Activated CD4-positive, alpha-beta T cell treated with anti-CD3 and anti-CD28 coated beads for 36 hours (primary cell): ENCODE measurements at regions of chr1 and their contacts with region 1.

Region 1: DNA sequence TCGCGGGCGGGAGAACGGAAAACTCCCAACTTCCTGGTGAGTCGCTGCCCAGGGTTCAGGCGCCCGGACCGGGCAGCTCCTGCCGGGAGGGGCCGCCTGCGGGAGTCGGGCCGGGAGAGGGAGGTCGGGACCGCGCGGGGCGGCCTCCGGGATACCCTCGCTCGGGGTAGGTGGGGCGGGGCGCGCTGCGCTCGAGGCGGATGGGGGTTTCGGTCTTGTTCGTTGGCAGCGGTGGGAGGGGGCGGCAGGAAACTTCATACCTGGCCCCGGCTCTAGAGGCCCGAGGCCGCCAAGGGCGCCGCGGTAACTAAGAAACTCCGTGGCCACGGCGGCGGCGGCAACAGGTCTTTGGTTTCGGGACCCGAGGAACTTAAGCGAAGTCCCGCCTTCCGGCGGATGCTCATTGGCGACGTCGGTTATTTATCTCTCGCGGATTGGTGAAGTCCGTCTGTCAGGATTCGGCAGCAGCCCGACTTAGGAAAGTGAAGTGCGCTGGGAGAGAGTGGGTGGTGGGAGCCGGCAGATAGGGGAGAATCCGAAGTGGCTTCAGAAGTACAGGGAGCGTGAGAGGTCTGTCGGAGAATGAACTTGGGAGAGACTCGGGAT is 546 bp downstream of the NEK7 start:
- DNase-seq: peak; percentile 89
- ATAC-seq: peak; percentile 29
- H3K4me3 Mint-ChIP-seq: peak overlapping the region; percentile 94
- H3K27ac Mint-ChIP-seq: peak overlapping the region; percentile 99
- H3K4me1 Mint-ChIP-seq: peaks cover 34% of the 10 kb centered on the region
- H3K27me3 Mint-ChIP-seq: no peaks in the 10 kb centered on the region

Region 2: DNA sequence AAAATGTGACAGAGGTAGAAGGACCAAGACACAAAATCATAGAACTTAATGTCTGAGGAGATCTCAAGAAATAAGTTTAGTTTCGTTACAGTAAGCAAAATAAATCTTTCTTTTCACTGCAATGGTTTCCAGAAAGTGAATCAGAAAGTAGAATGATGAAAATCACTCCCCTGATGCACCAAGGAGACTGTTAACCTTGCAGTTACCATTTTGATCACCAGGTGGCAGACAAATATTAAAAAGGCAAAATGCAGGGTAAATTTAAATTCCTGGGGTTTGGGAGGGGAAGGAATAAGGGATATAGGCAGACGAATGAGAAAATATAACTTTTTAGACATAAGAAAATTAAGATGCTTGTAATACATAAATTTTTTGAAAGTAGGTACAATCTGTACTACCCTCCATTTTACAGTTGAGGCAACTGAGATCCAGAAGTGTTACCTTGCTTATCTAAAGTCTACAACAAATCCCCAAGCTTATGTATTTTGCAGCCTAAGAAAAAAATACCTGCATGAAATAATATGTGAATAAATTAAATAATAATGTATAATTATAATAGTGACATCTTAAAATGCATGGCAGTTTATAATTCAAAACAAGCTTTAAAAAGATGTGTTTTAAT is 636.1 kb before region 1 on chr1:
- CTCF ChIA-PET with region 1: no interaction called
- POLR2A ChIA-PET with region 1: no interaction called
- intact Hi-C with region 1: loop called in 1 of 2 experiments (anchors 2 kb)
- DNase-seq: peak; percentile 13
- ATAC-seq: peak; percentile 65
- H3K4me3 Mint-ChIP-seq: no peak overlapping the region
- H3K27ac Mint-ChIP-seq: no peak overlapping the region
- H3K4me1 Mint-ChIP-seq: peaks cover 6% of the 10 kb centered on the region
- H3K27me3 Mint-ChIP-seq: no peaks in the 10 kb centered on the region

Region 3: DNA sequence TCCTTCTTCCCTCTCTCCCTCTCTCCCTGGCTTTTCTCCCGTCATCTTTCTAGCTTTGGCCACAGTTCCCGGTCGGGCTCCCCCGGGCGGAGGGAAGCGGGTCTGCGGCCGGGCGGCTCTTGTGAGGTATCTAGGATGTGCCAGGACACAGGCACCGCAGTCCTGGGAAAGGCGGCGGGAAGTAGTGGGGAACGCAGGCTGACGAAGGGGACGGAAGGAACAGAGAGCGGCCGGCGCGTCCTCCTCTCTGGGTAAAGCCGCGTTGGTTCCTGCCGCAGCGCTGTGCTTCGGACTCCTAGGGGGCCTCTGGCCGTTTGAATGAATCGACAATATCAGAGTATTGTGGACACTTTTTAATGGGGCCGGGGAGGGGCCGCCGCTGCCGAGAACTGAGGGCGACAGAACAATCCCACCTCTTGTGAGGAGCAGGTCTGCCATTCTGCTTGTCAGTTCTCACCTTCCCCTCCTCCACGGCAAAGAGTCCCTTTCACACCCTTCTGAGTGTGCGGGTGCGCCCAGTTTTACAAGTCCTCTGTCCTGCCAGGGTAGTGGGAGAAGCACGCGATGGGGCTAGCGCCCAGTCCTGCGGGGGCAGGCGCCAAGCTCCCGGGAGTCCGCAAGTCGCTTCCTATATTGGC is 241.4 kb before region 1 on chr1:
- CTCF ChIA-PET with region 1: no interaction called
- POLR2A ChIA-PET with region 1: no interaction called
- intact Hi-C with region 1: loop called in 1 of 2 experiments (anchors 5 kb)
- DNase-seq: peak; percentile 29
- ATAC-seq: no peak
- H3K4me3 Mint-ChIP-seq: peak overlapping the region; percentile 67
- H3K27ac Mint-ChIP-seq: no peak overlapping the region
- H3K4me1 Mint-ChIP-seq: peaks cover 72% of the 10 kb centered on the region
- H3K27me3 Mint-ChIP-seq: peaks cover 96% of the 10 kb centered on the region

Region 4: GRCh38 chr1:198167436-198167934 is 10.1 kb after region 1 on chr1:
- CTCF ChIA-PET with region 1: interaction called, 14 read pairs
- POLR2A ChIA-PET with region 1: interaction called, 3 read pairs
- intact Hi-C with region 1: loop called (anchors 1 kb)
- DNase-seq: peak; percentile 42
- ATAC-seq: peak; percentile 18
- H3K4me3 Mint-ChIP-seq: peak overlapping the region; percentile 54
- H3K27ac Mint-ChIP-seq: peak overlapping the region; percentile 93
- H3K4me1 Mint-ChIP-seq: peaks cover 93% of the 10 kb centered on the region
- H3K27me3 Mint-ChIP-seq: no peaks in the 10 kb centered on the region

Region 5: DNA sequence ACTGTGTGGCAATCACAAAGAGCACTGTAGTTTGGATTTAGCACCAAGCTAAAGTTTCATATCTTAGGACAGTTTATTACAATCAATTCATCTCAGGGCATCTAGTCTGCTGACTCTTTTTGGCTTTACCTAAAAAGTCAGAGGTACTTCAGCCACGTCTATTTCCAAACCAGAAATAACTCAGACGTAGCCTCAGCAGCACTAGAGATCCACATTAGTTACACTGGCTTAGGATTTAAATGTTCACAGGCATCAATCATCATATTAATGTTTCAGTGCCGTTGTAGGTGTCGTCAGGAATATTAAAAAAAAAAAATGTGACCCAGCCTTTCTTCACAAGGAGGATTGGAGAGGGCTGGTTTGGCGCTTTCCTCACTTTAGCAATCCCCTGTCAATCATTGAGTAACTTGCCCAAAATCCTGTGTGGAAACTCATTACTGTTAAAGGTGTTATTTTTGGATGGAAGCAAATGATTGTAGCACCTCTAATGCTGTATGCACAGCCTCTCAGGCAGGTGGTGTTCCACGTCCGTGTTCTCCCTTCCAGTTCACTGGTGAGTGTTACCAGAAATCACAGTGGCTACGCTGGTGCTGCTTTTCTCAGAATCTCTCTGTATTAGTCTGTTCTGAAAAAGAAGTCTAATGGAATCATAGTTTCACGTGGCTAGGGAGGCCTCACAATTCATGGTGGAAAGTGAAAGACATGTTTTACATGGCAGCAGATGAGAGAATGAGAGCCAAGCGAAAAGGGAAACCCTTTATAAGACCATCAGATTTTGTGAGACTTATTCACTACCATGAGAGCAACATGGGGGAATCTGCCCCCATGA is 44.8 kb after region 1 on chr1:
- CTCF ChIA-PET with region 1: no interaction called
- POLR2A ChIA-PET with region 1: no interaction called
- intact Hi-C with region 1: loop called in 1 of 2 experiments (anchors 1 kb)
- DNase-seq: peak; percentile 73
- ATAC-seq: peak; percentile 93
- H3K4me3 Mint-ChIP-seq: peak overlapping the region; percentile 15
- H3K27ac Mint-ChIP-seq: peak overlapping the region; percentile 86
- H3K4me1 Mint-ChIP-seq: peaks cover 75% of the 10 kb centered on the region
- H3K27me3 Mint-ChIP-seq: no peaks in the 10 kb centered on the region

Region 6: DNA sequence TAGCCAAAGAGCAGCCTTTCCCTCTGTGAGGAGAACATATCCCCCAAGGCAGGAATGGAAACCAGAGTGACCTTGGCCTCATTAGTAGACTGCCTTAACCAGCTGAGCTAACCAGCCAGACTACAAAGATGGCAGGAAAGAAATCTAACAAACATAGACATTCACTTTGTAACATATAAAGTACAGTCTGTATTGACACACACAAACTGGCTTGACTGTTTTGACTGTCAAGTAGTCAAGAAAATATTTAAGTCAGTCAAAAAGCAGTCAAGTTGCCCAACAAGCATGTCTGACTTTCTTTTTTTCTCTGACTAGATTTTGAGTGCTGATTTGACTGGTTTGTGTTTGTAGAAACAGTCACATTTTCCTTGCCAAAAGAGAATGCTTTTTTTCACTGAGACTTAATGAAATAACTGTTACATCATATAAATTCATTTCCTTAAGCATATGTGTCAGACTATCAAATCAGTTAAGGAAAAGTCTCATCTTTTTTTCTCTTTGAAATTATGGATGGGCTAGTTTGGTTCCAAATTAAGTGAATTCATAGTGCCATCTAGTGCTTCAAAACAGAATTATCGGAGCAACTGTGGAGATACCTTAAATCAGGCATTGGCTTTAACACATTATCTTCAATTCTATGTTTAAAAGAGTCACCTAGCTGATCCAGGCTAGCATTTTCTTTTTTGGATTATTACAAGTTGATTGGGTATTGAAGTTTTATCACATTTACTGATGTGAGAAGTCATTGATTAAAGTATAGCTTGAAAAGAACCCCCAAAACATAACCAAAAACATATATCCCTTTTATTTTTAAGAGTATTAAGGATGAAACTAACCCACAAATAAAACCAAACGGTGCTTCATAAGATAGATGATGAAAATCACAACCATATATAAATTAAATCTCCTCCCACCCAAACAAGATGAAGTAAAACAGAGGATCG is 308.1 kb after region 1 on chr1:
- CTCF ChIA-PET with region 1: interaction called, 3 read pairs
- POLR2A ChIA-PET with region 1: no interaction called
- intact Hi-C with region 1: loop called (anchors 1 to 5 kb)
- DNase-seq: no peak
- ATAC-seq: peak; percentile 74
- H3K4me3 Mint-ChIP-seq: no peak overlapping the region
- H3K27ac Mint-ChIP-seq: peak overlapping the region; percentile 58
- H3K4me1 Mint-ChIP-seq: peaks cover 20% of the 10 kb centered on the region
- H3K27me3 Mint-ChIP-seq: no peaks in the 10 kb centered on the region

Region 7: GRCh38 chr1:198638894-198639635 is 481.7 kb after region 1 on chr1 and contains the start of gene PTPRC:
- CTCF ChIA-PET with region 1: no interaction called
- POLR2A ChIA-PET with region 1: no interaction called
- intact Hi-C with region 1: loop called in 1 of 2 experiments (anchors 5 kb)
- DNase-seq: no peak
- ATAC-seq: peak; percentile 62
- H3K4me3 Mint-ChIP-seq: peak within 1 kb of the TSS; percentile 87
- H3K27ac Mint-ChIP-seq: peak within 1 kb of the TSS; percentile 99
- H3K4me1 Mint-ChIP-seq: peaks cover 52% of the 10 kb centered on the region
- H3K27me3 Mint-ChIP-seq: no peaks in the 10 kb centered on the region
- total RNA-seq, gene PTPRC: 458 to 564 TPM